HepG2 (cell line): ENCODE measurements at regions of chr1 and their contacts with region 1.

Region 1: GRCh38 chr1:246566128-246566812 is at the starts of genes CNST and TFB2M:
- DNase-seq: peak; percentile 97
- ATAC-seq: peak; percentile 97
- H3K4me3 ChIP-seq: peak within 1 kb of the TSS; percentile 95 to 99 (median 96)
- H3K27ac ChIP-seq: peak within 1 kb of the TSS; percentile 77
- H3K4me1 ChIP-seq: peaks cover 53% of the 10 kb centered on the region
- H3K27me3 ChIP-seq: no peaks in the 10 kb centered on the region; a peak in 1 of 5 replicates
- CTCF ChIP-seq: 0 out of 2 replicates have a peak, but pooled peaks have one; percentile 34
- EP300 ChIP-seq: no peak
- POLR2A ChIP-seq: peak; percentile 72 to 80
- RAD21 ChIP-seq: peak; percentile 58; the same call in 1 of the 2 replicates
- total RNA-seq, gene CNST: 12.4 and 15.7 TPM in 2 replicates
- total RNA-seq, gene TFB2M: 31.4 and 45.9 TPM in 2 replicates

Region 2: DNA sequence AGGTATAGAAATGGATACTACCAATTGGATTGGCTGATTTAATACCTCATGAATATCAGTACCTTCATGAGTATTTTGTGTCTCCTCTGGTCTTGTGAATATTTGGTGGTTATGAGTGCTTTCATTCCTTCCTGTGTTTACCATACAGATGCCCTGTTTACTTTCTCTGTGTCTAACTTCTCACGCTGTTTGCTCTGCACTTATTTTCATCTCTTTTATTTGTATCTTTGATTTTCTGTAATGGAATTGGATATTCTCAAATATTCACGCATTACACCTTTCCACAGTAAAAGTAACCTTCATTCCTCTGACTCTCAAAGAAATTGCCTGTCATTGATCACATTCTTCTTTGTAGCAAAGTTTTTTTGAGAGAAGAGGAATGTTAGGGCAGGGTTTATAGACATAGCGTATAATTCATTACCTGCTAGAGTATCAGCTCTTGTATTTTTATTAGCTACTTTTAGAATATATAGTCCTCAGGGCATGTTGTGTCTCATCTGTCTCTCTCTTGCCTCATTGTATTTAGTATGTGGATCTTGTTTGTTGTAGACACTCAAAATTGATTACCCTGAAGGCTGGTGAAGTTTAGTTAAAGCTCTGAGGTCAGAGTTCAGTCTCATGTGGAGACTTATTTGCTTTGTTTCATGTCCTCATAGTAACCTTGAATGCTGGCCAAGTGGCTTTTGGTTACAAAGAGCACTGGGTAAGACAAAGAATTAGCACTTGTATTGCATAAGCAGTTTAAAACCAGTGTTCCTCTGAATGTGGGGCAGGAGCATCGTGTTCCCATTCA is 17.0 kb after region 1 on chr1:
- CTCF ChIA-PET with region 1: no interaction called
- POLR2A ChIA-PET with region 1: interaction called, 34 read pairs
- in situ Hi-C with region 1: no loop called
- intact Hi-C with region 1: loop called (anchors 1 kb)
- DNase-seq: peak; percentile 98
- ATAC-seq: peak; percentile 81
- H3K4me3 ChIP-seq: peak overlapping the region; percentile 55 to 70 (median 58)
- H3K27ac ChIP-seq: peak overlapping the region; percentile 86
- H3K4me1 ChIP-seq: peaks cover 89% of the 10 kb centered on the region
- H3K27me3 ChIP-seq: no peaks in the 10 kb centered on the region
- CTCF ChIP-seq: no peak
- EP300 ChIP-seq: peak; percentile 69 to 97
- POLR2A ChIP-seq: no peak
- RAD21 ChIP-seq: no peak

Region 3: GRCh38 chr1:246602194-246602593 is 35.9 kb after region 1 on chr1:
- CTCF ChIA-PET with region 1: no interaction called
- POLR2A ChIA-PET with region 1: interaction called, 4 read pairs
- in situ Hi-C with region 1: no loop called
- intact Hi-C with region 1: loop called (anchors 5 kb)
- DNase-seq: no peak
- ATAC-seq: no peak
- H3K4me3 ChIP-seq: no peak overlapping the region
- H3K27ac ChIP-seq: no peak overlapping the region
- H3K4me1 ChIP-seq: no peaks in the 10 kb centered on the region
- H3K27me3 ChIP-seq: no peaks in the 10 kb centered on the region
- CTCF ChIP-seq: no peak
- EP300 ChIP-seq: no peak
- POLR2A ChIP-seq: no peak
- RAD21 ChIP-seq: no peak